IMR-90 (cell line): ENCODE measurements at regions of chr7 and their contacts with region 1.

Region 1: GRCh38 chr7:116699721-116700120 is 27.7 kb downstream of the MET start:
- DNase-seq: no peak
- ATAC-seq: no peak
- H3K4me3 ChIP-seq: no peak overlapping the region
- H3K27ac ChIP-seq: no peak overlapping the region
- H3K4me1 ChIP-seq: no peaks in the 10 kb centered on the region; the same call in 1 of the 2 replicates
- H3K27me3 ChIP-seq: no peaks in the 10 kb centered on the region
- CTCF ChIP-seq: no peak
- POLR2A ChIP-seq: no peak
- RAD21 ChIP-seq: no peak

Region 2: DNA sequence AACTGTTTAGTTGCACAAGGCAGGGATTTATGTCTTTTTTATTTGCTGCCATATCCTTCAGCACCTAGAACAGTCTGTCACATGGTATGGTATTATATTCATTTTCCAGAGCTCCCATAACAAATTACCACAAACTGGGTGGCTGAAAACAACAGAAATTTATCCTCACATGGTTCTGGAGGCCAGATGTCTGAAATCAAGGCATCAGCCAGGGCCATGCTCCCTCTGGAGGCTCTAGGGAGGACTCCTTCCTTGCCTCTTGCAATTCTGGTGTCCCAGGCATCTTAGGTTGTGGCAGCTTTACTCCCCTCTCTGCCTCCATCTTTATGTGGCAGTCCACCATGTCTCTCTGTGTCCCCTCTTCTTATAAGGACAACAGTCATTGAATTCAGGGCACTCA is 15.4 kb after region 1 on chr7:
- CTCF ChIA-PET with region 1: no interaction called
- POLR2A ChIA-PET with region 1: no interaction called
- dilution Hi-C with region 1: no loop called
- in situ Hi-C with region 1: no loop called
- intact Hi-C with region 1: loop called (anchors 1 kb)
- DNase-seq: peak; percentile 19
- ATAC-seq: no peak
- H3K4me3 ChIP-seq: no peak overlapping the region
- H3K27ac ChIP-seq: no peak overlapping the region
- H3K4me1 ChIP-seq: peaks cover 6% of the 10 kb centered on the region
- H3K27me3 ChIP-seq: no peaks in the 10 kb centered on the region
- CTCF ChIP-seq: 0 out of 2 replicates have a peak, but pooled peaks have one; percentile 21
- POLR2A ChIP-seq: no peak
- RAD21 ChIP-seq: no peak

Region 3: GRCh38 chr7:116726713-116727431 is 27.2 kb after region 1 on chr7:
- CTCF ChIA-PET with region 1: no interaction called
- POLR2A ChIA-PET with region 1: no interaction called
- dilution Hi-C with region 1: no loop called
- in situ Hi-C with region 1: no loop called
- intact Hi-C with region 1: no loop called
- DNase-seq: no peak
- ATAC-seq: peak; percentile 80
- H3K4me3 ChIP-seq: no peak overlapping the region
- H3K27ac ChIP-seq: no peak overlapping the region
- H3K4me1 ChIP-seq: peaks cover 7% of the 10 kb centered on the region
- H3K27me3 ChIP-seq: no peaks in the 10 kb centered on the region
- CTCF ChIP-seq: no peak
- POLR2A ChIP-seq: no peak
- RAD21 ChIP-seq: no peak

Region 4: DNA sequence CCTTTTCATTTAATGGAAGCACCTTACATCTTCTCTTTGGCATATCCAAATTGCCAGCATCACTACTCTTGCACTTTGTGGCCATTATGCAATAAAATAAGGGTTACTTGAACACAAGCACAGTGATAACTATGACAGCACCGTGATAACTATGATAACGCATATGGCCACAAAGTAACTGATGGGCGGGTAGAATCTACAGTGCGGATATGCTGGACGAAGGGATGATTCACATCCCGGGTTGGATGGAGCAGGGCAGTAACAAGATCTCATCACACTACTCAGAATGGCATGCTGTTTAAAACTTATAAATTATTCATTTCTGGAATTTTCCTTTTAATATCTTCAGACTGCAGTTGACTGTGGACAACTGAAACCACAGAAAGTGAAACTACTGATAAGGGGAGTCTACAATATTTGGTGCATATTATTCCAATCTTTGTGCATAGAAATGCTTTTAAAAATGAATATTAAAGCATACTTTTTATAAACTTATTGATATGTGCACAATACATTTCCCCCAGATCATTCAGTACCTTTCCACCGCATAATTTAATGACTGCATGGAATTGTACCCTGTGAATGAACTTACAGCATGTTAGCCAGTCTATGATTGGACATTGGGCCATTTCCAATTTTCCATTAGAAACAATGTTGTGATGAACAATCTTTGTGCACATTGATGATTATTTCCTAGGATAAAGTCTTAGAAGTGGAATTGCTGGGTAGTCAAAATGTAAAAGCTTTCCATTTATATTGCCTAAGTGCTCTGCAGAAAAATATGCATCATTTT is 486.7 kb after region 1 on chr7:
- CTCF ChIA-PET with region 1: no interaction called
- POLR2A ChIA-PET with region 1: no interaction called
- dilution Hi-C with region 1: no loop called
- in situ Hi-C with region 1: no loop called
- intact Hi-C with region 1: no loop called
- DNase-seq: peak; percentile 85
- ATAC-seq: peak; percentile 86
- H3K4me3 ChIP-seq: no peak overlapping the region
- H3K27ac ChIP-seq: no peak overlapping the region
- H3K4me1 ChIP-seq: 0 out of 2 replicates have a peak, but pooled peaks cover 1% of the 10 kb centered on the region
- H3K27me3 ChIP-seq: no peaks in the 10 kb centered on the region
- CTCF ChIP-seq: no peak
- POLR2A ChIP-seq: no peak
- RAD21 ChIP-seq: no peak